HepG2 (cell line): ENCODE measurements at regions of chr21 and their contacts with region 1.

Region 1: GRCh38 chr21:33403779-33404585 is 769 bp downstream of the IFNGR2 start:
- DNase-seq: peak; percentile 26
- ATAC-seq: peak; percentile 76
- H3K4me3 ChIP-seq: peak overlapping the region; percentile 85 to 97 (median 95)
- H3K27ac ChIP-seq: peak overlapping the region; percentile 79
- H3K4me1 ChIP-seq: peaks cover 53% of the 10 kb centered on the region
- H3K27me3 ChIP-seq: no peaks in the 10 kb centered on the region; a peak in 1 of 5 replicates
- CTCF ChIP-seq: no peak
- EP300 ChIP-seq: no peak
- POLR2A ChIP-seq: peak; percentile 42 to 48; a peak in 3 of 4 replicates
- RAD21 ChIP-seq: no peak

Region 2: DNA sequence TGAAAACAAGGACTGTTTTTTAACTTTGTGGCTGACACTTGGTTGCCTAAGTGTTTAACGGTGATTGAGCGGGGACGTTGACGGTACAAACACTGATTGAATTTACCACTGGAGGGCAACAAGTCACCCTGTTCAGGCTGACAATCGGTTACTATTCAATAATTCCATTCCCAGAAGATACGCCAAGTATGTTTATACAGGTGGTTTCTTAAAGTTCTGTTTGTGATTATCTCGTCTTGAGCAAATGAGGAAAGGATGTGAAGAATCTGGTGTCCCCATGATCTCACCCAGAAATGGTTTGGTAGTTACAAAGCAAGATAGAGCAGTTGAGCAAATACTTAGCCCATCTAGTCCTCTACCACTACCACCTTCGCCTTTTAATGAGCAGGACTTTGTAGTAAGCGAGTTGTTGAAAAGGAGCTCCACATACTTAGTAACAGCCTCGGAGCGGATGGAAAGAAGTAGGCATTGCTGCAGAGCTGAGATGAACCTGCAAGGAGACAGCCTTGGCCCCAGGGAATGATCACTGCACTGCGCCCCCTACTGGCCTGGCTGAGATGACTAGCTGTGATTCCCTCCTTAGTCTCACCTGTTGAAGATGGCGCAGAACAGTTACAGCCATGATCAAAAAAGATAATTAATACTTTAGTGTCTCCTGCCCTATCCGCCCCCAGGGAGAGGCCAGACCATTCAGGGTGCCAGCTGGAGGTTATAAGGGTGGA is 42.9 kb before region 1 on chr21:
- CTCF ChIA-PET with region 1: no interaction called
- POLR2A ChIA-PET with region 1: interaction called, 5 read pairs
- in situ Hi-C with region 1: no loop called
- intact Hi-C with region 1: loop called (anchors 5 kb)
- DNase-seq: peak; percentile 50
- ATAC-seq: peak; percentile 96
- H3K4me3 ChIP-seq: peak overlapping the region; percentile 27 to 41 (median 40); a peak in 2 of 6 replicates
- H3K27ac ChIP-seq: no peak overlapping the region
- H3K4me1 ChIP-seq: peaks cover 38% of the 10 kb centered on the region
- H3K27me3 ChIP-seq: no peaks in the 10 kb centered on the region
- CTCF ChIP-seq: peak; percentile 93
- EP300 ChIP-seq: no peak
- POLR2A ChIP-seq: no peak
- RAD21 ChIP-seq: 0 out of 2 replicates have a peak, but pooled peaks have one; percentile 27